ENCODE measurements at regions of chr3 and their contacts with region 1.

Region 1: DNA sequence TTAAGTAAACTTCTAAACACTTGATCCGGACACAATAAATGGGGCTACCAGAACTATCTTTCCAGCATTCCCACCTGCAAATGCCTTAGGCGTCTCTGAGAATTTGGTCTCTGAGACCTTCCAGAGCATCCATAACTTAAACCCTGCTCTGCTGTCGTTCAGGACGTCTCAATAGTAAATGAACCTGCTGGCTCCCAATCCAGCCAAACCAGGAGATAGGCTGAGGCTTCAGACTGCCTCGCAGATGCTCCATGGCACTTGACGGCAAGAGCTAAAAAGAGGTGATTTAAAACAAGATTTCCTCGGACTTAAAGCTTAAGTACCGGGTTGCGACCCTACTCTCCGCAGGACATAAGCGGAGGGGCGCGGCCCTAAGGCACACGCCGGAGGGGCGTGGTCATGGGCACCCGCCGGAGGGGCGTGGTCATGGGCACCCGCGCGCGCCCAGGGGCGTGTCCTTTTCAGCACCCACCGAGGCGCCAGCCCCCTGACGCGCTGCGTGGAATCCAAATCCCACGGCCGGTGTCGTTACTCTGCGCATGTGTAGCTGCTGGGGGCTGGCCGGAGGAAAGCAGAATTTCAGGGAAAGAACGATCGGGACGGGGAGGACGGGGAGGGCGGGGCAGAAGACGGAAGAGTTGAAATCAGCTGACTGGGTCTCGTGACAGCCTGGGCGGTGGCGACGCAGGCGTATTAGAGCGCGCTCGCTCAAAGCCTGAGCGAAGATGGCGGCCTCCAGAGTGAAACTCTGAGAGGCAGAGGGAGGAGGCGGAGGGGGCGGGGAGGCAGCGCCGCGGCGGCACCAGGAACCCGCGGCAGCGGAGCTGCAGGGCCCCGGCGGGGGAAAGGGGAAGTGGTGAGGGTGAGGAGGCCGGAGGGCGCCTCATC is at the start of gene DNAJC13:
- DNase-seq: peak; percentile 80 to 93 (median 92)
- ATAC-seq: peak; percentile 97
- H3K4me3 ChIP-seq: peak within 1 kb of the TSS; percentile 94
- H3K4me3 Mint-ChIP-seq: peak within 1 kb of the TSS; percentile 97 to 100 (median 99)
- H3K27ac ChIP-seq: peak within 1 kb of the TSS; percentile 82
- H3K27ac Mint-ChIP-seq: peak within 1 kb of the TSS; percentile 93 to 99 (median 98)
- H3K4me1 ChIP-seq: peaks cover 7 to 11% of the 10 kb centered on the region in 2 donors
- H3K4me1 Mint-ChIP-seq: peaks cover 12 to 40% (median 33%) of the 10 kb centered on the region in 7 donors
- H3K27me3 ChIP-seq: no peaks in the 10 kb centered on the region
- H3K27me3 Mint-ChIP-seq: peaks cover 0 to 4% (median 0%) of the 10 kb centered on the region in 5 donors
- total RNA-seq, gene DNAJC13: 23.6 to 41.5 (median 37.5) TPM

Region 2: GRCh38 chr3:131381444-131382291 is 1035.4 kb before region 1 on chr3 and contains the start of gene NUDT16:
- CTCF ChIA-PET with region 1: no interaction called
- POLR2A ChIA-PET with region 1: no interaction called
- intact Hi-C with region 1: loop called (anchors 1 to 2 kb)
- DNase-seq: peak; percentile 86 to 97 (median 91)
- ATAC-seq: peak; percentile 99
- H3K4me3 ChIP-seq: peak within 1 kb of the TSS; percentile 90
- H3K4me3 Mint-ChIP-seq: peak within 1 kb of the TSS; percentile 93 to 98 (median 96)
- H3K27ac ChIP-seq: peak within 1 kb of the TSS; percentile 69
- H3K27ac Mint-ChIP-seq: peak within 1 kb of the TSS; percentile 90 to 98 (median 95)
- H3K4me1 ChIP-seq: peaks cover 6 to 14% of the 10 kb centered on the region in 2 donors
- H3K4me1 Mint-ChIP-seq: peaks cover 30 to 51% (median 42%) of the 10 kb centered on the region in 7 donors
- H3K27me3 ChIP-seq: no peaks in the 10 kb centered on the region
- H3K27me3 Mint-ChIP-seq: no peaks in the 10 kb centered on the region
- total RNA-seq, gene NUDT16: 7.1 to 14.5 (median 12.9) TPM

Region 3: GRCh38 chr3:132174500-132174899 is 242.6 kb before region 1 on chr3:
- CTCF ChIA-PET with region 1: no interaction called
- POLR2A ChIA-PET with region 1: no interaction called
- intact Hi-C with region 1: no loop called
- DNase-seq: no peak
- ATAC-seq: no peak
- H3K4me3 ChIP-seq: no peak overlapping the region
- H3K4me3 Mint-ChIP-seq: no peak overlapping the region
- H3K27ac ChIP-seq: no peak overlapping the region
- H3K27ac Mint-ChIP-seq: no peak overlapping the region
- H3K4me1 ChIP-seq: no peaks in the 10 kb centered on the region
- H3K4me1 Mint-ChIP-seq: no peaks in the 10 kb centered on the region
- H3K27me3 ChIP-seq: no peaks in the 10 kb centered on the region
- H3K27me3 Mint-ChIP-seq: peaks cover 0 to 23% (median 18%) of the 10 kb centered on the region in 5 donors

Region 4: DNA sequence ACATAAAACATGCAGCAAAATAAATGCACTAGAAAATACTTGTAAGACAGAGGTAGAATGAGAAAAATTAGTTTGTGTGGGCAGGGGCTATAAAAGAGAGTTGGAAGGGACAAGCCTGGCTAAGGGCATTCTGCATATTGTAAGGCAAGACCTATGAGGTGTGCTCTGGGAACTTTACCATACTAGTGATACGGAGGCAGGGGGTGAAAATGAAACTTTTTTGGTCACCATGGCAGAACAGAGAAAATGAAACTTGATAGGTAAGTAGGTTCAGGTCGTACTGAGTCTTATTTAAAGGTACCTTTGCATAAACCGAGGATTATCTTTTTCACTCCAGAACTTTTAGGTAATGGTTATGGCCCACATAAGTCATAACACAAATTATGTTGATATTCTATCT is 105.3 kb after region 1 on chr3:
- CTCF ChIA-PET with region 1: no interaction called
- POLR2A ChIA-PET with region 1: no interaction called
- intact Hi-C with region 1: loop called in 1 of 2 experiments (anchors 10 kb)
- DNase-seq: no peak
- ATAC-seq: no peak
- H3K4me3 ChIP-seq: no peak overlapping the region
- H3K4me3 Mint-ChIP-seq: peak overlapping the region in 1 of 10 donors; percentile 56
- H3K27ac ChIP-seq: no peak overlapping the region
- H3K27ac Mint-ChIP-seq: peak overlapping the region in 5 of 9 donors; percentile 10 to 35 (median 29)
- H3K4me1 ChIP-seq: no peaks in the 10 kb centered on the region
- H3K4me1 Mint-ChIP-seq: peaks cover 0 to 17% (median 0%) of the 10 kb centered on the region in 7 donors
- H3K27me3 ChIP-seq: no peaks in the 10 kb centered on the region
- H3K27me3 Mint-ChIP-seq: no peaks in the 10 kb centered on the region

Region 5: DNA sequence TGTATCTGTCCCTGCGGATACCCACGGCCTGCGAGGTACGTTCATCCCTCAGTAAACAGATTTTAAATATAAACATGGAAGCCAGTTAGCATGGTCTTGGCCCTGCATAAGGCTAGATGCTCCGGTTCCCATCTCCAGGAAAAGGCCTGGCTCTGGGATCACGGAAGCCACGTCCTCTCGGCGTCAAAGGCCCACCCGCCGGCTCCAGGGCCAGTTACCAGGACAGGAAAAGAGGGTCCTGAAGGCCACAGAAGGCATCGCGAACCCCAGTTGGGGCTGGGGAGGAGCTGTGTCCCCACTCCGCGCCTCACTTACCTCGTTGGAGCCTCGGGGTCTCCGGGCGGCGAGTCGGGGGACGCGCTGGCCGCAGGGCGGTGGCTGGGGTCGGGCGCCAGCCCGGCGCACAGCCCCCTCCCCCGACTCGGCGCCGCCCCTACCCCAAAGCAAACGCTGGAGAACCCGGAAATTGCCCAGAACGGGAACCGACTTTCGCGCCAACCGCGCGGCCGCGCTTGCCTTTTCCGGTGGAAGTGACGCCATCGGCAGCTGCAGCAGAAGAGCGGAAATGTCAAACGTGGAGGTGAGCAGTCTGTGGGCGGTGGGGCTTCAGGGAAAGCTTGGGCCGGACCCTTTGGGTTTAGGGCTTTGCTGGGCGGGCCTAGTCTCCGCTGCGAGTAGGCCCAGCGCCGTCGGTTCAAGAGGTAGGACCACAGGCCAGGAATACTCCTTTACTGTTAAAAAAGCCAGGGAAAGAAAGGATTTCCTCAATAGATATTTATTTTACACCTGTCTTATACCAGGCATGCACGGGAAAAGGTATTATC is 1244.6 kb after region 1 on chr3 and contains the start of gene TOPBP1:
- CTCF ChIA-PET with region 1: no interaction called
- POLR2A ChIA-PET with region 1: no interaction called
- intact Hi-C with region 1: loop called (anchors 5 to 10 kb)
- DNase-seq: peak; percentile 68 to 88 (median 85)
- ATAC-seq: peak; percentile 90
- H3K4me3 ChIP-seq: peak within 1 kb of the TSS; percentile 80
- H3K4me3 Mint-ChIP-seq: peak within 1 kb of the TSS; percentile 90 to 99 (median 97)
- H3K27ac ChIP-seq: peak within 1 kb of the TSS; percentile 79
- H3K27ac Mint-ChIP-seq: peak within 1 kb of the TSS; percentile 93 to 99 (median 97)
- H3K4me1 ChIP-seq: peaks cover 8 to 25% of the 10 kb centered on the region in 2 donors
- H3K4me1 Mint-ChIP-seq: peaks cover 30 to 53% (median 46%) of the 10 kb centered on the region in 7 donors
- H3K27me3 ChIP-seq: no peaks in the 10 kb centered on the region
- H3K27me3 Mint-ChIP-seq: no peaks in the 10 kb centered on the region
- total RNA-seq, gene TOPBP1: 26.3 to 73.8 (median 37.6) TPM